AG04449 (cell line): ENCODE measurements at regions of chr17 and their contacts with region 1.

Region 1: DNA sequence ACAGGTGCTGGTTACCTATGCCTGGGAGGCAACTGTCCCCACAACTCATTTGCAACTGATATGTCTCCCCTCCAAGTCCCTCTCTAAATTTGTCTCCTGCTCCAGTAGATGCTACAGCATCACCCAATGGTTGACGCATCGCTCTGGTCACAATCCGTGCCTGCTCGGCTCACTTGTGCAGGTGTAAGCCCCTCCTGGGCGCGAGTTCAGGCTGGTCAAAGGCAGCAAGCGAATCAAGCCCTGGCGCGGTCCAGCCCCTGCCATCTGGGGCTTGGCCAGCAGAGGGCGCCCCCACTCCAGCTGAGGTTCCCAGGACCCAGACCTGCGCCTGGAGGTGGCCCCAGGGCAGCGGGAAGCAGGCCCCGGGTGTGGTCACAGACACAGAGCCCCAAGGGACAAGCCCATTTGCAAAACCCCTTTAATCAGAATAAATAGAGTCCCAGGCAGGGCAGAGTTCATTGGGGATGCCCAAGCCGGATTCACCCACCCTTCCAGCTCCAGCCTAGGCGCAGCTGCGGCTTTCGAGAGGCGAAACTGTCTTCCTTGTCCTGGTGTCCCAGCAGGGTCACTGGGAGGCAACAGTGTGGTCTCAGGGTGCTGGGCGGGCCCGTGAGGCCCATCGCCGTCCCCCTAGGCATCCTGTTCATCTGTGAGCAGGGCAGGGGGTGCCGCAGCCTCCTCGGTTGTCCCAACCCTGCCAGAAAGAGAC is 15.9 kb downstream of the TMC6 start:
- DNase-seq: no peak
- H3K4me3 ChIP-seq: no peak overlapping the region
- CTCF ChIP-seq: peak; percentile 99

Region 2: DNA sequence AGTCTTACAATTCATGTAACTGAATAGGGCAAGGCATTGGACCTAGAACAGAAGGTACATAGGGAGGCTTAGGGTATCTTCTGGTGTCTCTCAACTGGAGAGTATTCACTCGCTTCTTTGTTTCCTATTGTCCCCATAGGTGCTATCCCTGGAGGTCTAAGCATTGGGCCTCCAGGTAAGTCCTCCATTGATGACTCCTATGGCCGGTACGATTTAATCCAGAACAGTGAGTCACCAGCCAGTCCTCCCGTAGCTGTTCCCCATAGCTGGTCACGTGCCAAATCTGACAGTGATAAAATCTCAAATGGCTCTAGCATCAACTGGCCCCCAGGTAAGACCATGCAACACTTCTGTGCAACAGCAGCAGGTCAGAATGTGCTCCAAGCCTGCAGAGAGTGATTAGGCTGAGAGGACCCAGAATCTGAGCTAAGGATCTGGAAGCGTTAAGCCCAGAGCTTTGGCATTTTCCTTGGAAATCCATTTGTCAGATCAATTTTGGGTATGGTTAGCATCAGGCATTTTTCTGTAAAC is 19.8 kb before region 1 on chr17:
- CTCF ChIA-PET with region 1: interaction called, 116 read pairs
- POLR2A ChIA-PET with region 1: no interaction called
- DNase-seq: no peak
- H3K4me3 ChIP-seq: no peak overlapping the region
- CTCF ChIP-seq: no peak

Region 3: DNA sequence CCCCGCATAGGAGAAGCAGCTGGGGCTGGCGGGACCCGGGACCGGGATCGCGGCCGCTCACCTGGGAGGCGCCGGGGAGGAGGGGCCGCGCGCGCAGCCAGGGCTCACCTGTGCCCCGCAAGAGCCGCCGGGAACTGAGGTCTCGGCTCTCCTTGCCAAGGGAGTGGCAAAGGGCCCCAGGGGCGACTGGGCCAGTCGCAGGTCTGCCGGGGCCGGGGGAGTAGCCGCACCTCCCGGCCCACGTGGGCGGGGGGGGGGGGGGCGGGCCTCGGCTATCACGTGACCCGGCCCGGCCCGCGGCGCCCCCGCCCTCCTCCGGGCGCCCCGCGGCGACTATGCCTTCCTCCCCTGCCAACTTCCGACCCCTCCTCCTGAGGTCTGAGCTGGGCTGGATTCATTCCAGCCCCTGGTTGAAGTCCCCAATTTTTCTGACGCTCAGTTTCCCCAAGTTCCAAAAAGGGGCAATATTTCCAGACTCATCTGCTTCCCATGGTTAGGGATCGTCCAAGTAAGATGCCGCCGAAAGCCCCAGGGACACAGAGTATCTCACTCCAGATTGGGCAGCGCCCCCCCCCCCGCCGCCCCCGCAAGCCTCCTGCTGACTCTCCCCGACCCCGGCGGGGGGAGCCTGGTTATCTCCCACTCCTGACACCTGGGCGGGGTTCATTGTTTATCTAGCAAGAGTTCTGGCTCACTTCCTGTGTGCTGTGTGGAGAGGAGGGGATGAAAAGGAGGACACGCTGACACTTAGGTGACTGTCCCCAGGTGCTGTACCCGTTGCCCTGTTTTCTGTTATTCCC is 16.1 kb after region 1 on chr17 and contains the start of gene TMC6:
- CTCF ChIA-PET with region 1: interaction called, 43 read pairs
- POLR2A ChIA-PET with region 1: interaction called, 3 read pairs
- DNase-seq: no peak
- H3K4me3 ChIP-seq: peak within 1 kb of the TSS; percentile 52
- CTCF ChIP-seq: no peak

Region 4: DNA sequence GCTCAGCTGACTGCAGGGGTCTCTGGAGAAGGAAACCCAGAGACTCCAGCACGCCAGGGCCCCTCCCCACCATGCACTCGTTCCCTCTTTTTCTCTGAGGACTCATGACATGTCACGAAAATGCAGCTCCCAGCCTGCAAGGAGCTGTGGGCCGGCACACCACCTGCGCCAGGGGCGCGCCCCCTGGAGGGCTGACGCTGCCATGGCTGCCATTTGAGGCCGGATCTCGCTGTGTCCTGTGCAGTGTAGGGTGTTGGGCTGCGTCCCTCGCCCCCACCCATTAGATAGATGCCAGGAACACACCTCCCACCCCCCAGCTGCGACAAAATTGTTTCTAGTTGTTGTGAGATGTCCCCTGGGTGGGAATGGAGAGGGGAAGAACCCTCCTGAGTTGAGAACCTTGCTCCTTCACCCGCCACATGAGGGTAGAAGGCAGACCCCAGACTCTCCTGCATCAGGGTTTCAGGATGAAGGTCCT is 63.9 kb after region 1 on chr17:
- CTCF ChIA-PET with region 1: interaction called, 17 read pairs
- POLR2A ChIA-PET with region 1: no interaction called
- DNase-seq: no peak
- H3K4me3 ChIP-seq: no peak overlapping the region
- CTCF ChIP-seq: peak; percentile 95

Region 5: DNA sequence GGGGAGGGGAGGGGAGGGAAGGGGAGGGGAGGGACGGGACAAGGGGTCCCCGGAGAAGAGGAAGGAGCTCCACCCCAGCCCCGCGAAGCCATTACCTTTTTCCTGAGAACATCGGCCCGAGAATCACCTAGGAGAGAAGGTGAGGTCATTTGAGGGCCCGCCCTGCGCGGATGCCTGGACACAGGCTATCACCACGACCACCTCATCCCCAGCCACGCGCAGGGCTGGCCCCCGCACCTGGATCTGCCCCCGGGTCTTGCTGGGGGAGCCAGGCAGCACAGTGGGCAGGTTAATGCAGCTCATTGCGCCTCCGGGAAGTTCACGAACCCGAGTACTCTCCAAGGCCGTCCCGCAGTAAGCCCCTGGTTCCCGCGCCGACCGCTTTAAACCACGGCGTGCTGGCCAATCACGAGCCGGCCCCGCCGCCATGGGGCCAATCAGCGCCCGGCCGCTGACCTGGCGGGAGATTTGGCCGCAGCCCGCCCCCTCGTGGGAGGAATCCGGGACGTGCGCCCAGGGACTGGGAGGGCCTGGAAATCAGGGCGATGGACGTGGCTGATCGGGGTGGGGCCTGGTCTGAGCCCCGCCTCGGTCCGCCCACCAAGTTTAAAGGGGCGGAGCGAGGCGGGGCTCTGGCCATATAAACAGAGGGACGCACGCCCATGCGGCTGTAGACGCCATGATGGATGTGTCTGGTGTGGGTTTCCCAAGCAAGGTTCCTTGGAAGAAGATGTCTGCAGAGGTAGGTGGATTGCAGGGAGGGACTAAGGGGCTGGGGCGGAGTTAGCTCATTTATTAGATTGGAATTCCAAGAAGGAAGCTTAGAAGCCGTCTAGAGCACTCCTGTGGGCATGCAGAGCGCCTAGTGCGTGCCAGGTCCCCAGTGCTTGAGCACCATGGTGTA is 74.3 kb after region 1 on chr17 and contains the starts of genes AFMID and TK1:
- CTCF ChIA-PET with region 1: interaction called, 14 read pairs
- POLR2A ChIA-PET with region 1: no interaction called
- DNase-seq: peak; percentile 52
- H3K4me3 ChIP-seq: peak within 1 kb of the TSS; percentile 87
- CTCF ChIP-seq: peak; percentile 95